ENCODE measurements at regions of chr2 and their contacts with region 1.

Region 1: DNA sequence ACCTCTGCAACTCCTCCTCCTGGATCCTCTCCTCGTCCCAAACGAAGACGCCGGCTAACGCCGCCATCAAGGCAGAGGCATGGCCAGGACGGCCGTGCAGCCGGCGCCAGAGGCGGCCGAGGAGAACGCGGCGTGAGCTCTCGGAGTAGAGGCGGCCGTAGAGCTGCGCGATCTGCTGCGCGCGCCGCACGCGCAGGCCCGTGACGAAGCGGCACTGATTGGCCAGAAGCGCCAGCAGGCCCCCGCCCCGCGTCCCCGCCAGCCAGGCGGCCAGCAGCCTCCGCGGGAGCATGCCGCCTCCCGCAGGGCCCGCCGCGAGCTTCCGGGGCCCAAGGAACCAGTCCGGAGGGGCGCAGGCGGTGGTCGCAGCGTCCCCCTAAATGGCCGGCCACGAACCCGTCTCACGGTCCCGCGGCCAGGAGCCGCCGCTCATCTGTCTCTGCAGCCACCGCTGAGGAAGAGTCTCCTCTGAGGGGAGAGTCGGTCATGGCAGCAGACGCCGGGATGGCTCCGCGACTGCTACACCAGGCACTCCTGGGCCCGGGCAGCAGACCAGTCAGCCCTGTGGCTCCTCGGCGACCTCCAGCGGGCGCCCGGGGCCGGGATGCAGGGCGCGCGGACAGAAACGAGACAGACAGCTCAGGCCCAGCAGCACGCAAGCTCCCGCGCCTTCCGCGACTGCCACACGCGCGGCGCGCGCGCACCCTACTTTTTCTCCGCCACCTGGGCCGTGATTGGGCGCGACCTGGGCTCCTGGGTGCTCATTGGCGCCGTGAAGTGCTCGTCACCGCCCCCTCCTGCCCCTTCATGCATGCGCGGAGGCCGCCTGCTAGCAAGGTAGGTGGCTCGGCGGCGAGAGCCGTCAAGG is at the start of gene STARD7:
- DNase-seq: peak; percentile 98 to 99 (median 99)
- ATAC-seq: peak; percentile 95 to 98 (median 96)
- H3K4me3 ChIP-seq: peak within 1 kb of the TSS; percentile 89 to 98 (median 94)
- H3K27ac ChIP-seq: peak within 1 kb of the TSS; percentile 97 to 99 (median 98)
- H3K4me1 ChIP-seq: peaks cover 16 to 41% (median 24%) of the 10 kb centered on the region in 3 donors
- H3K27me3 ChIP-seq: no peaks in the 10 kb centered on the region
- CTCF ChIP-seq: peak in 1 of 4 donors; percentile 12
- total RNA-seq, gene STARD7: 37.1 to 65.1 (median 58.5) TPM

Region 2: GRCh38 chr2:96265840-96266679 is 57.7 kb after region 1 on chr2 and contains the starts of genes CIAO1 and TMEM127:
- intact Hi-C with region 1: loop called in 2 of 3 experiments (anchors 10 kb)
- DNase-seq: peak; percentile 98 to 99 (median 98)
- ATAC-seq: peak; percentile 94 to 97 (median 95)
- H3K4me3 ChIP-seq: peak within 1 kb of the TSS; percentile 87 to 99 (median 97)
- H3K27ac ChIP-seq: peak within 1 kb of the TSS; percentile 61 to 84 (median 74)
- H3K4me1 ChIP-seq: peaks cover 18 to 37% (median 25%) of the 10 kb centered on the region in 3 donors
- H3K27me3 ChIP-seq: no peaks in the 10 kb centered on the region
- CTCF ChIP-seq: peak in 1 of 4 donors; percentile 8
- total RNA-seq, gene CIAO1: 25.2 to 34.4 (median 29.3) TPM
- total RNA-seq, gene TMEM127: 20.1 to 38.4 (median 24.9) TPM